Kidney (tissue), 22 donors: ENCODE measurements at regions of chr19 and their contacts with region 1.

Region 1: GRCh38 chr19:16180611-16181010 is 4.6 kb upstream of the FAM32A start:
- DNase-seq: no peak
- H3K4me3 ChIP-seq: no peak overlapping the region
- H3K27ac ChIP-seq: no peak overlapping the region
- H3K4me1 ChIP-seq: no peaks in the 10 kb centered on the region
- H3K27me3 ChIP-seq: no peaks in the 10 kb centered on the region
- CTCF ChIP-seq: no peak

Region 2: GRCh38 chr19:16041299-16041990 is 139.2 kb before region 1 on chr19:
- intact Hi-C with region 1: loop called (anchors 5 kb)
- DNase-seq: peak; percentile 78 to 89 (median 81)
- H3K4me3 ChIP-seq: peak overlapping the region in 1 of 3 donors; percentile 34
- H3K27ac ChIP-seq: no peak overlapping the region
- H3K4me1 ChIP-seq: peaks cover 0 to 4% (median 0%) of the 10 kb centered on the region in 3 donors
- H3K27me3 ChIP-seq: no peaks in the 10 kb centered on the region
- CTCF ChIP-seq: peak; percentile 89